ENCODE measurements at regions of chr18 and their contacts with region 1.

Region 1: GRCh38 chr18:2655178-2655953 is at the start of gene SMCHD1:
- DNase-seq: peak; percentile 96
- ATAC-seq: peak; percentile 78
- H3K4me3 ChIP-seq: peak within 1 kb of the TSS; percentile 86 to 99 (median 96)
- H3K4me3 Mint-ChIP-seq: peak within 1 kb of the TSS; percentile 98
- H3K27ac ChIP-seq: peak within 1 kb of the TSS; percentile 97 to 100
- H3K27ac Mint-ChIP-seq: peak within 1 kb of the TSS; percentile 98
- H3K4me1 ChIP-seq: peaks cover 32 to 33% of the 10 kb centered on the region in 2 donors
- H3K4me1 Mint-ChIP-seq: peaks cover 37% of the 10 kb centered on the region
- H3K27me3 ChIP-seq: no peaks in the 10 kb centered on the region
- H3K27me3 Mint-ChIP-seq: no peaks in the 10 kb centered on the region
- CTCF ChIP-seq: no peak
- total RNA-seq, gene SMCHD1: 380 and 443 TPM in 2 replicates

Region 2: DNA sequence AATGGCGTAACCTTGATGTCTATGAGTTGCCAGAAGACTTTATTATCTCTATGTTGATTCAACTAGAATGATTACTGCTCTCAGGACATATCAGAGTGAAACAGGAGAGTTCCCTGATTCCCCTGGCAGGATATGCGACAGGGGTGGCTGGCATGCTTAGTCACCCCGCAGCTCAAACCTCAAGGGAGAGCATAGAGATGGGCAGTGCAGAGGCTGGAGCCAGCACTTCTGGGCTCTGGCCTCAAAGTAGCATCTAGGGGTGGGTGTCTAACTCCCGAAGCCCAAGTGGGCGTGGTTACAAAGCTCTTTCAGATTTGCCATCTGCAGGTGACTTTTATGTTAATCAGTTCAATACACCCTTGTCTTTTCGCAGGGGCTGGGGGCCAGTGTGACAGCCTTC is 1359.1 kb before region 1 on chr18:
- CTCF ChIA-PET with region 1: no interaction called
- POLR2A ChIA-PET with region 1: no interaction called
- intact Hi-C with region 1: no loop called
- DNase-seq: no peak
- ATAC-seq: no peak
- H3K4me3 ChIP-seq: no peak overlapping the region
- H3K4me3 Mint-ChIP-seq: no peak overlapping the region
- H3K27ac ChIP-seq: no peak overlapping the region
- H3K27ac Mint-ChIP-seq: no peak overlapping the region
- H3K4me1 ChIP-seq: no peaks in the 10 kb centered on the region
- H3K4me1 Mint-ChIP-seq: no peaks in the 10 kb centered on the region
- H3K27me3 ChIP-seq: no peaks in the 10 kb centered on the region
- H3K27me3 Mint-ChIP-seq: no peaks in the 10 kb centered on the region
- CTCF ChIP-seq: no peak

Region 3: DNA sequence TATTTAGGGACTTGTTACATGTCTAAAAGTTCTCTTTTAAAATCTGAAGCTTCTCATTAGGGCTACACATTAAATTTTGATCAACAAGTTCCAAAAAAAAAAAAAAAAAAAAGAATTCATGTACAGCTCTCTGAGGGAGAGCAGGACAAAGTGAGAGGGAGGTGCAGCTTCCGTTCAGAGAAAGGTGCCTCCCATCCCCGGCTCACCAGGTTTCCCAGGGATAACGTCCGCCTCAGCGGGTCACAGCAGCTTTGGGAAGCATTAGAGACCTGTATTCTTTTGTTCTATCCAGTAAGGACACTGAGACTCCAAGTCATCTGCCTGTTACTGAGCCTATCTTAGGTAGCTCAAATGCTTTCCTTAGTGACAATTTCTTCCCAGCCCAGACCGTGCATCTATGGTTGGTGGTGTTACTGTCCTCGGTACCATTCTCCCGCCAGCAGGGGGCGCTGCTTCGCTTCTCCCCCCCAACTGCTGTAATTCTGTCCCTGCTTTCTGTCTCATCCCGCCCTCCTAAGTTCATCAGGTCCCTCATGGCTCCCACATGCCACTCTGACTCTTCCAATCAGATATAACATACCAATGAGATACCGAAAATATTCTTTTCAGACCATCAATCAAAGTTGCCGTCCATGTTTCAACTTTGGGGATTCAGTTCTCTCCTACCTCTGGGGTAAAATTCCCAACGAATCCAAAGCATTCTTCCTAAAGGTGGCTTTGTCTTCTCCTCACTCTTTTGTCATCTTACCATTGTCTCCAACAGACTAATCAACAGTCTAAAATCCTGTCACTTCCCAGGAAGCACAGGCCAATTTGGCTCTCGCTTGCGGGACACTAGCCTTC is 550.5 kb before region 1 on chr18:
- CTCF ChIA-PET with region 1: no interaction called
- POLR2A ChIA-PET with region 1: no interaction called
- intact Hi-C with region 1: no loop called
- DNase-seq: peak; percentile 44
- ATAC-seq: peak; percentile 56
- H3K4me3 ChIP-seq: no peak overlapping the region
- H3K4me3 Mint-ChIP-seq: no peak overlapping the region
- H3K27ac ChIP-seq: no peak overlapping the region
- H3K27ac Mint-ChIP-seq: no peak overlapping the region
- H3K4me1 ChIP-seq: no peaks in the 10 kb centered on the region
- H3K4me1 Mint-ChIP-seq: peaks cover 6% of the 10 kb centered on the region
- H3K27me3 ChIP-seq: no peaks in the 10 kb centered on the region
- H3K27me3 Mint-ChIP-seq: peaks cover 2% of the 10 kb centered on the region
- CTCF ChIP-seq: peak; percentile 75

Region 4: GRCh38 chr18:2606335-2606734 is 49.0 kb before region 1 on chr18:
- CTCF ChIA-PET with region 1: interaction called, 5 read pairs
- POLR2A ChIA-PET with region 1: interaction called, 14 read pairs
- intact Hi-C with region 1: no loop called
- DNase-seq: peak; percentile 21
- ATAC-seq: no peak
- H3K4me3 ChIP-seq: peak overlapping the region in 1 of 5 experiments; percentile 20
- H3K4me3 Mint-ChIP-seq: peak overlapping the region; percentile 70
- H3K27ac ChIP-seq: peak overlapping the region; percentile 19 to 66
- H3K27ac Mint-ChIP-seq: peak overlapping the region; percentile 69
- H3K4me1 ChIP-seq: peaks cover 6 to 17% of the 10 kb centered on the region in 2 donors
- H3K4me1 Mint-ChIP-seq: peaks cover 22% of the 10 kb centered on the region
- H3K27me3 ChIP-seq: no peaks in the 10 kb centered on the region
- H3K27me3 Mint-ChIP-seq: no peaks in the 10 kb centered on the region
- CTCF ChIP-seq: no peak

Region 5: DNA sequence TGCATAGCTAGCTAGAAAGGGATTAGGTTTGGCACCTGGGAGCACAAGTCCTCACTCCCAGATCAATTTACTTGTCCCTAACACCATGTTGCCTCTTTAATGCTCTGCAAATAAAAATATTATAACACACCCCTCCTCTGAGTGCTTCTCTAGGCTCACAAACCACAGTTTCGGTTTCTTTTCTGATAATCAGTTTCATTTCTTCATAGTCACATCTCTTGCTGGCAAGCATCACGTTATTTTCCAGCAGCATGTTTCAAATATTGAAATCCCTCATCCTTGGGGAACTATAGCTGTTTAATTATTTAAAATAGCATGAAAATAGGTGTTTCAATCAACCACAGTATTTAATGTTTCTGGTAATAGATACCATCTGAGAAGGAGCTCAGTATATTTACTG is 13.7 kb before region 1 on chr18:
- CTCF ChIA-PET with region 1: interaction called, 88 read pairs
- POLR2A ChIA-PET with region 1: interaction called, 166 read pairs
- intact Hi-C with region 1: loop called (anchors 1 kb)
- DNase-seq: peak; percentile 79
- ATAC-seq: peak; percentile 28
- H3K4me3 ChIP-seq: peak overlapping the region in 3 of 5 experiments; percentile 11 to 58 (median 17)
- H3K4me3 Mint-ChIP-seq: peak overlapping the region; percentile 89
- H3K27ac ChIP-seq: peak overlapping the region; percentile 74 to 78
- H3K27ac Mint-ChIP-seq: peak overlapping the region; percentile 89
- H3K4me1 ChIP-seq: peaks cover 61 to 62% of the 10 kb centered on the region in 2 donors
- H3K4me1 Mint-ChIP-seq: peaks cover 47% of the 10 kb centered on the region
- H3K27me3 ChIP-seq: no peaks in the 10 kb centered on the region
- H3K27me3 Mint-ChIP-seq: no peaks in the 10 kb centered on the region
- CTCF ChIP-seq: no peak

Region 6: DNA sequence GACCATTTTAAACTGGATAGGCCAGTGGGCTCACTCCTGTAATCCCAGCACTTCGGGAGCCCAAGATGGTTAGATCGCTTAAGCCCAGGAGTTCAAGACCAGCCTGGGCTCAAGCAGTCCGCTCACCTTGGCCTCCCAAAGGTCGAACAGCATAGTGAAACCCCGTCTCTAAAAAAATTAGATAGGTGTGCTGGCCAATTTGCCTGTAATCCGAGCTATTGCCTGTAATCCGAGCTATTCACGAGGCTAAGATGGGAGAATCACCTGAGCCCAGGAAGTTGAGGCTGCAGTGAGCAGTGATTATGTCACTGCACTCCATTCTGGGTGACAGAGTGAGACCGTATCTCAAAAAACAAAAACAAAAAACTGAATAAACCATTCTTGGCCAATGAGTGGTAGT is 138.8 kb after region 1 on chr18:
- CTCF ChIA-PET with region 1: no interaction called
- POLR2A ChIA-PET with region 1: no interaction called
- intact Hi-C with region 1: no loop called
- DNase-seq: no peak
- ATAC-seq: no peak
- H3K4me3 ChIP-seq: no peak overlapping the region
- H3K4me3 Mint-ChIP-seq: no peak overlapping the region
- H3K27ac ChIP-seq: no peak overlapping the region
- H3K27ac Mint-ChIP-seq: no peak overlapping the region
- H3K4me1 ChIP-seq: no peaks in the 10 kb centered on the region
- H3K4me1 Mint-ChIP-seq: peaks cover 9% of the 10 kb centered on the region
- H3K27me3 ChIP-seq: no peaks in the 10 kb centered on the region
- H3K27me3 Mint-ChIP-seq: no peaks in the 10 kb centered on the region
- CTCF ChIP-seq: no peak

Region 7: GRCh38 chr18:2917259-2918047 is 262.1 kb after region 1 on chr18:
- CTCF ChIA-PET with region 1: no interaction called
- POLR2A ChIA-PET with region 1: interaction called, 10 read pairs
- intact Hi-C with region 1: no loop called
- DNase-seq: peak; percentile 60
- ATAC-seq: peak; percentile 86
- H3K4me3 ChIP-seq: peak overlapping the region in 2 of 5 experiments; percentile 20 to 34
- H3K4me3 Mint-ChIP-seq: peak overlapping the region; percentile 79
- H3K27ac ChIP-seq: peak overlapping the region; percentile 55 to 74
- H3K27ac Mint-ChIP-seq: peak overlapping the region; percentile 92
- H3K4me1 ChIP-seq: peaks cover 21 to 26% of the 10 kb centered on the region in 2 donors
- H3K4me1 Mint-ChIP-seq: peaks cover 38% of the 10 kb centered on the region
- H3K27me3 ChIP-seq: no peaks in the 10 kb centered on the region
- H3K27me3 Mint-ChIP-seq: no peaks in the 10 kb centered on the region
- CTCF ChIP-seq: no peak

Region 8: GRCh38 chr18:3012964-3013804 is 357.8 kb after region 1 on chr18 and contains the start of gene LPIN2:
- CTCF ChIA-PET with region 1: no interaction called
- POLR2A ChIA-PET with region 1: no interaction called
- intact Hi-C with region 1: loop called (anchors 5 kb)
- DNase-seq: peak; percentile 96
- ATAC-seq: peak; percentile 83
- H3K4me3 ChIP-seq: peak within 1 kb of the TSS; percentile 43 to 75 (median 73)
- H3K4me3 Mint-ChIP-seq: peak within 1 kb of the TSS; percentile 93
- H3K27ac ChIP-seq: peak within 1 kb of the TSS; percentile 74 to 82
- H3K27ac Mint-ChIP-seq: peak within 1 kb of the TSS; percentile 89
- H3K4me1 ChIP-seq: peaks cover 51 to 54% of the 10 kb centered on the region in 2 donors
- H3K4me1 Mint-ChIP-seq: peaks cover 55% of the 10 kb centered on the region
- H3K27me3 ChIP-seq: no peaks in the 10 kb centered on the region
- H3K27me3 Mint-ChIP-seq: no peaks in the 10 kb centered on the region
- CTCF ChIP-seq: no peak
- total RNA-seq, gene LPIN2: 31.0 and 32.9 TPM in 2 replicates